Tibial artery (tissue), 4 donors: ENCODE measurements at regions of chr9 and their contacts with region 1.

Region 1: DNA sequence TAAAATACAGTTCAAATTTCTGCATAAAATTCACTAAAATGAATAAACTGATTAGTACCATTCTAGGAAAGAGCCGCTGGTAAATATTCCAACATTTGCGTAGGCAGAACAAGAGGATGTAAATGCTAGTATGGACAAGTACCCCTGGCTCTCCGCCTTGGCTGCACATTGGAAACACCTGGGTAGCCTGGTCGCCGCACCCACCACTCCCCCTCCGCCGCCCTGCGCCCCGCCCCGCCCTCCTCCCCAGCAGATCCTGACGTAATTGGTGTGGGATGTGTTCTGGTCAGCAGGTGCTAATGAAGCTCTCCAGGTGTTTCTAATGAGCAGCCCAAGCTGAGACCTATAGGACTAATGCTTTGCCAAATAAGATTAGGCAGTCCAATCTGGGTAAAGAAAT is 225.7 kb downstream of the FRMD3 start:
- DNase-seq: no peak
- H3K4me3 ChIP-seq: no peak overlapping the region
- H3K27ac ChIP-seq: no peak overlapping the region
- H3K4me1 ChIP-seq: peaks cover 0 to 2% (median 0%) of the 10 kb centered on the region in 4 donors
- H3K27me3 ChIP-seq: no peaks in the 10 kb centered on the region
- CTCF ChIP-seq: no peak

Region 2: GRCh38 chr9:83992421-83992820 is 679.9 kb after region 1 on chr9:
- intact Hi-C with region 1: loop called (anchors 10 kb)
- DNase-seq: no peak
- H3K4me3 ChIP-seq: no peak overlapping the region
- H3K27ac ChIP-seq: no peak overlapping the region
- H3K4me1 ChIP-seq: no peaks in the 10 kb centered on the region
- H3K27me3 ChIP-seq: no peaks in the 10 kb centered on the region
- CTCF ChIP-seq: no peak